Activated B cell treated with CpG ODN at 0.5 μM for 24 hours (primary cell): ENCODE measurements at regions of chr7 and their contacts with region 1.

Region 1: DNA sequence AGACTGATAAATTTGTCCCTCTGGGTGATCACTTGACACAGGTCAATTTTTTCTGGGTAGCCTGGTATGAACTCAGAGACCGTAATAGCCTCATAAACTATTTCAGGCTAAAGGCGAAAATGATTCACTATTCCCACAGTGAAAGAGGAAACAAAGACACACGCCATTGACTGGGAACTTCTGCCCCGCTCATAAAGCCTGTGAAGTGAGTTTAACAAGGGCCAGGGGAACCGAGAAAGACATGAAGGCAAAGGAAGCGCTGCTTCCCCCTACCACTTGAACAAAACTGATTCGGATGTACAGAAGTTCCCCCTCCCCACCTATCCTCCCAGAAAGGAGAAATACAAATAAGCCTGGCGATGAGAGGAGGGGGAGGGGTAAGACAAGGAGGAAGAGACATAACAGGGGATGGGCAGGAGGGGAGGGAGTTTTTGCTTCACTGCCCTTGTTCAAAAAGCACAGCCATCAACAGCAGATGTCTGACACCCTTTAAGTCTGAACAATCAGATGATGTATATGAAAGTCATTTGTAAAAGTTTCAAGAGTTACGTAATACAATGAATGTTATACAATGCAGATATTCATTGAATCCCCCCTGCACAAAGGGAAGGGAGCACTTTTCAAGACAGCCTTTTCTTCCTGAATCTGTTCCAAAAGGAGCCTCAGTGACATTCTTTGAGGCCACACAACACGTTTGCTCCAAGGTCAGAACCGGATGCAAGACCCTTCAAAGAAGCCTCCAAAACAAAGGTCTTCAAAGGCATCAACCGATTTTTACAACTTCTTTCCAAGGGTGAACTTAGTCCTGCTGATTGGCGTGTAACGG is 734 bp downstream of the ABCB4 start:
- DNase-seq: peak; percentile 37
- ATAC-seq: peak; percentile 76
- H3K4me3 Mint-ChIP-seq: peak overlapping the region; percentile 89
- H3K27ac Mint-ChIP-seq: peak overlapping the region; percentile 96
- H3K4me1 Mint-ChIP-seq: peaks cover 44% of the 10 kb centered on the region
- H3K27me3 Mint-ChIP-seq: no peaks in the 10 kb centered on the region
- CTCF ChIP-seq: no peak

Region 2: DNA sequence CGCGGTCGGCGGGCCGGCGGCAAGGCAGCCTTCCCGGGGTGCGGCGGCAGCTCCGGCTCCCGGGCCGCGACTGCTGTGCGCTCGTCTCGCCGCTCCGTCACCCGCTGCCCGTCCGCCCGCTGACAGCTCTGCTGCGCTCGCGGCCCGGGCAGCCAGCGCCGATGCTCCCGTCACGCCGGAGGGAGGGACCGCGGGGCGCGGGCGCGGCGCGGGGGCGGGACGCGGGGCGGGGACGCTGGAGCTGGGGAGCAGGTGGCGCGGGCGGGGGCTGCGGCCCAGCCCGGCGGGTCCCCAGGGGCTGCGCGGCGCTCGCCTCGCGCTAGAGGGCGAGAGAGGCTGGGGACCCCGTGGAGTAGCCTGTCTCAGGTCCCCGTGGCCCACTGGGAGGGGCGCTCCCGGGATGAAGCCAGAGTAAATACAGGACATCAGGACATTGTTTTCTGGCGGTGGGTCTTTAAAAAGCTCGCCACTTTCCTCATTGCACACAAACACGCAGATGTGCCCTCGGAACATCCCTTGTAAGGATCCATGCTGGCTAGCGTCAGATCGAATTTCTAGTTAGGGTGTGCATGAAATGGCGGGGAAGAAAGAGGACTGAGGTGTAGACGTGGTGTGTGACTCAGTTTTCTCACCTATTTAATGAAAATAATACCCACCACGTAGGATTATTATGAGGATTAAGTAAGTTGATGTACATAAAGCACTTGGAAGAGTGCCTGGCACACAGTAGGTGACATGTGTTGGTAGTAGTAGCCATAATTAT is 415.0 kb before region 1 on chr7 and contains the start of gene ELAPOR2:
- CTCF ChIA-PET with region 1: no interaction called
- POLR2A ChIA-PET with region 1: no interaction called
- intact Hi-C with region 1: loop called (anchors 2 kb)
- DNase-seq: peak; percentile 94
- ATAC-seq: peak; percentile 96
- H3K4me3 Mint-ChIP-seq: peak within 1 kb of the TSS; percentile 88
- H3K27ac Mint-ChIP-seq: peak within 1 kb of the TSS; percentile 77
- H3K4me1 Mint-ChIP-seq: peaks cover 14% of the 10 kb centered on the region
- H3K27me3 Mint-ChIP-seq: no peaks in the 10 kb centered on the region
- CTCF ChIP-seq: no peak
- total RNA-seq, gene ELAPOR2: 4.5 and 5.1 TPM in 2 replicates

Region 3: DNA sequence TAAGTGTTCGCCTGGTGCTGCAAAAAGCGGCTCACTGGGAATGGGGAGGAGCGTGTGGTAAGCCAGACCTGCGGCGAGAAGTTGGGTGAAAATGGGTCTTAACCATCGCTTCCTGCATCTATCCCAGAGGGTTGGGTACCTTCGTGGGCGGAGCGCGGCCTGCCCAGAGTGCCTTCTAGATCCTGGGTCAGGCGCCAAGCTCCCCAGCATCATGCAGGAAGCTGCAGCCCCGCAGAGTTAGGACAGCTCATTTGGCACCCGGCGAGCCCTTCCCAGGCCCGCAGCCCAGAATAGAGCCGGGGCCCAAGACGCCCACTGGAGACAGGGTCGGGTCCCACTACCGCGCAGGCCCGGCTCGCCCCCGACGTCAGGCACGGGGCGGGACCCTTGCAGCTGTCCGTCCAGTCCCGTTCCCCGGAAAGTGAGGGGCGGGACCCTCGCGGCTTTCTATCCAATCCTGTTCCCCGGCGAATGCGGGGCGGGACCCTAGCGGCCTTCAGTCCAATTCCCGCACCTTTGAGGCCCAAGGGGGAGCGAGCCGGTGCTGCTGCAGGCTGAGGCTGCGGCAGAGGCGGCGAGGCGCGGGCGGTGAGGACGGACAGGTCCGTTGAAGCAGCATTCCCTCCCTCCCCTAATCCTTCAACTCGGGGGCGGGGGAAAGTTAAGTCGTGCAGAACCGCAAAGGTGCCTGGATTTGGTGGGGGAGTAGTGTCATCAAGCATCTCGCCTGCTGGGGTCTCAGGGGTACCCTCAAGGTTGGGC is 129.4 kb before region 1 on chr7 and contains the start of gene CROT:
- CTCF ChIA-PET with region 1: no interaction called
- POLR2A ChIA-PET with region 1: no interaction called
- intact Hi-C with region 1: loop called (anchors 1 kb)
- DNase-seq: peak; percentile 95
- ATAC-seq: peak; percentile 98
- H3K4me3 Mint-ChIP-seq: peak within 1 kb of the TSS; percentile 96
- H3K27ac Mint-ChIP-seq: peak within 1 kb of the TSS; percentile 96
- H3K4me1 Mint-ChIP-seq: peaks cover 25% of the 10 kb centered on the region
- H3K27me3 Mint-ChIP-seq: no peaks in the 10 kb centered on the region
- CTCF ChIP-seq: no peak
- total RNA-seq, gene CROT: 7.9 and 9.2 TPM in 2 replicates

Region 4: DNA sequence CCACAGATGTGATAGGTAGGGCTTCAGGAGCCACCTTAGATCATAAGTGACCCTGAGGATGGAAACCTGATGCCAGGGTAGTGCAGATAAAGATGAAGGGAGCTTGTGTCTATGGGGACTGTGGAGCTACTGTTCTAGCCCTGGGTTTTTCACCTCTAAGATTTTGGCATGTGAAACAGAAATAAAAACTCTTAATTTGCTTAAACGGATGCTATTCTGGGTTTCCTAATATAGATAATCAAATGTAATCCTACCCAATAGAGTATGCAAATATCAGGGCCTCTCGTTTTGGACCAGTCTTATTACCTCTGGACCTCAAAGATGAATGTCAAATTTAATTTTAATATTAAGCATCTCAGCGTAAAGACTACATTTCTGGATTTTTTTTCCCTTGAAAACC is 48.6 kb before region 1 on chr7:
- CTCF ChIA-PET with region 1: no interaction called
- POLR2A ChIA-PET with region 1: no interaction called
- intact Hi-C with region 1: no loop called
- DNase-seq: no peak
- ATAC-seq: no peak
- H3K4me3 Mint-ChIP-seq: no peak overlapping the region
- H3K27ac Mint-ChIP-seq: no peak overlapping the region
- H3K4me1 Mint-ChIP-seq: peaks cover 20% of the 10 kb centered on the region
- H3K27me3 Mint-ChIP-seq: no peaks in the 10 kb centered on the region
- CTCF ChIP-seq: no peak

Region 5: GRCh38 chr7:87445897-87446296 is 28.8 kb before region 1 on chr7:
- CTCF ChIA-PET with region 1: no interaction called
- POLR2A ChIA-PET with region 1: no interaction called
- intact Hi-C with region 1: loop called (anchors 1 kb)
- DNase-seq: no peak
- ATAC-seq: peak; percentile 74
- H3K4me3 Mint-ChIP-seq: no peak overlapping the region
- H3K27ac Mint-ChIP-seq: peak overlapping the region; percentile 38
- H3K4me1 Mint-ChIP-seq: peaks cover 11% of the 10 kb centered on the region
- H3K27me3 Mint-ChIP-seq: no peaks in the 10 kb centered on the region
- CTCF ChIP-seq: no peak

Region 6: DNA sequence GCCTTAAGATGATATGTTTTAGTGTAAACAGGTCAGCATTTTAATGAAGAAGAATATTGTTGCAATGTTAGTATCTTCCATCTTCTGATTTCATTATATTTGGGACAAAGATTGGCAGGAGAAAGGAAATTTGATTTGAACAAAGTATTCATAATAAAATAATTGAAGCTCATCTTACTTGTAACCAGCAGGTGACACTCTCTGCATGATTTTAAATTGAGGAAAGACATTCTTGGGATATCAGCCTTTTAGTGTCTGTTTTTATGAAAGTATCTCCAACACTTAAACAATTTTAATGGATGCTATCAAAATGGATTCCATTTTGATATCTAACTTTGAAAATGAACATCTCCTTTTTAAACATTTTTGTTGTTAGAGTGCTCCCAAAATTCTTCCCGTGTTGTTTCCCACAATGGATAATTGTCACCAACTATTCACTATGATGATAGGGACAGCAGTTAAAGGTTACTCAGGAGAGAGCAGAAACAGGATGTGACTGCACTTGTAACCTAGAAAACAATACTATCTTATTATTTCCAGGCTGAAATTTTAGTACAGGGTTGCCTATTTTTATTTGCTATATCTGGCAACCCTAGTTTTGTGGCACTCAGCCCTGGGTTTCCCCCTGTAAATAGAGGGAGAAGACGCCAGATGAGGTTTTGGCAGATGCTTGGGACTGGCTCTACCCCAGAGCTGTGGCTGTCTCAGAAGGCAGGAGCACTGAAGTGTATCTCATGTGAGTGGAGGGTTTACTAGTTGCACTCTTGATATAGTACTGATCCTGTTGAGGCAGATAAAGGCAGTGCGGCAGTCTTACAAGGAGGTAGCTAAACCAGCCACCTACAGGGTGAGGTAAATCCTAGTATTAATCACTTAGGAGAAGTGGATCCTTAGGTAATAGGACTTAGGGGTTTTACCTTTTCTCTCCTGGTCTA is 31.8 kb after region 1 on chr7:
- CTCF ChIA-PET with region 1: interaction called, 3 read pairs
- POLR2A ChIA-PET with region 1: no interaction called
- intact Hi-C with region 1: loop called (anchors 2 kb)
- DNase-seq: no peak
- ATAC-seq: no peak
- H3K4me3 Mint-ChIP-seq: no peak overlapping the region
- H3K27ac Mint-ChIP-seq: peak overlapping the region; percentile 30
- H3K4me1 Mint-ChIP-seq: peaks cover 29% of the 10 kb centered on the region
- H3K27me3 Mint-ChIP-seq: no peaks in the 10 kb centered on the region
- CTCF ChIP-seq: no peak

Region 7: GRCh38 chr7:87600130-87601124 is 125.7 kb after region 1 on chr7 and contains the start of gene ABCB1:
- CTCF ChIA-PET with region 1: interaction called, 3 read pairs
- POLR2A ChIA-PET with region 1: no interaction called
- intact Hi-C with region 1: loop called (anchors 1 kb)
- DNase-seq: peak; percentile 37
- ATAC-seq: peak; percentile 73
- H3K4me3 Mint-ChIP-seq: peak within 1 kb of the TSS; percentile 89
- H3K27ac Mint-ChIP-seq: peak within 1 kb of the TSS; percentile 76
- H3K4me1 Mint-ChIP-seq: peaks cover 22% of the 10 kb centered on the region
- H3K27me3 Mint-ChIP-seq: peaks cover 33% of the 10 kb centered on the region
- CTCF ChIP-seq: no peak
- total RNA-seq, gene ABCB1: 4.1 and 4.7 TPM in 2 replicates

Region 8: GRCh38 chr7:87876040-87876868 is 401.5 kb after region 1 on chr7 and contains the starts of genes DBF4 and SLC25A40:
- CTCF ChIA-PET with region 1: no interaction called
- POLR2A ChIA-PET with region 1: no interaction called
- intact Hi-C with region 1: loop called (anchors 1 kb)
- DNase-seq: peak; percentile 98
- ATAC-seq: peak; percentile 91
- H3K4me3 Mint-ChIP-seq: peak within 1 kb of the TSS; percentile 95
- H3K27ac Mint-ChIP-seq: peak within 1 kb of the TSS; percentile 96
- H3K4me1 Mint-ChIP-seq: peaks cover 43% of the 10 kb centered on the region
- H3K27me3 Mint-ChIP-seq: no peaks in the 10 kb centered on the region
- CTCF ChIP-seq: no peak
- total RNA-seq, gene DBF4: 20.2 and 30.3 TPM in 2 replicates
- total RNA-seq, gene SLC25A40: 16.6 and 21.7 TPM in 2 replicates